ENCODE measurements at regions of chr14 and their contacts with region 1.

Region 1: GRCh38 chr14:29805415-29806123 is 122.1 kb downstream of the PRKD1 start:
- DNase-seq: peak in 24 of 42 donors; percentile 7 to 75 (median 34)

Region 2: GRCh38 chr14:29927376-29928116 is 122.0 kb after region 1 on chr14 and contains the start of gene PRKD1:
- intact Hi-C with region 1: loop called (anchors 10 kb)
- DNase-seq: peak in 41 of 42 donors; percentile 19 to 90 (median 76)

Measured in head of caudate nucleus (tissue), 42 donors.